Heart left ventricle (tissue), 16 donors: ENCODE measurements at regions of chr11 and their contacts with region 1.

Region 1: GRCh38 chr11:130002846-130003716 is 446 bp upstream of the PRDM10 start:
- DNase-seq: peak; percentile 95 to 97 (median 96)
- ATAC-seq: peak; percentile 90 to 95 (median 92)
- H3K4me3 ChIP-seq: peak overlapping the region; percentile 55 to 94 (median 80)
- H3K27ac ChIP-seq: peak overlapping the region; percentile 95 to 100 (median 100)
- H3K4me1 ChIP-seq: peaks cover 0 to 25% (median 19%) of the 10 kb centered on the region in 12 donors
- H3K27me3 ChIP-seq: no peaks in the 10 kb centered on the region
- CTCF ChIP-seq: no peak
- POLR2A ChIP-seq: peak; percentile 67 to 90

Region 2: GRCh38 chr11:129911298-129911697 is 91.8 kb before region 1 on chr11:
- intact Hi-C with region 1: no loop called
- DNase-seq: no peak
- ATAC-seq: no peak
- H3K4me3 ChIP-seq: no peak overlapping the region
- H3K27ac ChIP-seq: no peak overlapping the region
- H3K4me1 ChIP-seq: peaks cover 0 to 5% (median 0%) of the 10 kb centered on the region in 12 donors
- H3K27me3 ChIP-seq: no peaks in the 10 kb centered on the region
- CTCF ChIP-seq: no peak
- POLR2A ChIP-seq: no peak

Region 3: GRCh38 chr11:130069684-130070108 is 66.6 kb after region 1 on chr11 and contains the start of gene APLP2:
- intact Hi-C with region 1: loop called (anchors 1 to 5 kb)
- DNase-seq: peak; percentile 99 to 100 (median 100)
- ATAC-seq: peak; percentile 94 to 98 (median 97)
- H3K4me3 ChIP-seq: peak within 1 kb of the TSS; percentile 59 to 99 (median 82)
- H3K27ac ChIP-seq: peak within 1 kb of the TSS; percentile 78 to 98 (median 95)
- H3K4me1 ChIP-seq: peaks cover 0 to 30% (median 20%) of the 10 kb centered on the region in 12 donors
- H3K27me3 ChIP-seq: no peaks in the 10 kb centered on the region
- CTCF ChIP-seq: no peak
- POLR2A ChIP-seq: peak; percentile 33 to 88
- total RNA-seq, gene APLP2: 215 to 423 (median 334) TPM